Right ventricle myocardium inferior (tissue), 1 donor: ENCODE measurements at regions of chr10 and their contacts with region 1.

Region 1: DNA sequence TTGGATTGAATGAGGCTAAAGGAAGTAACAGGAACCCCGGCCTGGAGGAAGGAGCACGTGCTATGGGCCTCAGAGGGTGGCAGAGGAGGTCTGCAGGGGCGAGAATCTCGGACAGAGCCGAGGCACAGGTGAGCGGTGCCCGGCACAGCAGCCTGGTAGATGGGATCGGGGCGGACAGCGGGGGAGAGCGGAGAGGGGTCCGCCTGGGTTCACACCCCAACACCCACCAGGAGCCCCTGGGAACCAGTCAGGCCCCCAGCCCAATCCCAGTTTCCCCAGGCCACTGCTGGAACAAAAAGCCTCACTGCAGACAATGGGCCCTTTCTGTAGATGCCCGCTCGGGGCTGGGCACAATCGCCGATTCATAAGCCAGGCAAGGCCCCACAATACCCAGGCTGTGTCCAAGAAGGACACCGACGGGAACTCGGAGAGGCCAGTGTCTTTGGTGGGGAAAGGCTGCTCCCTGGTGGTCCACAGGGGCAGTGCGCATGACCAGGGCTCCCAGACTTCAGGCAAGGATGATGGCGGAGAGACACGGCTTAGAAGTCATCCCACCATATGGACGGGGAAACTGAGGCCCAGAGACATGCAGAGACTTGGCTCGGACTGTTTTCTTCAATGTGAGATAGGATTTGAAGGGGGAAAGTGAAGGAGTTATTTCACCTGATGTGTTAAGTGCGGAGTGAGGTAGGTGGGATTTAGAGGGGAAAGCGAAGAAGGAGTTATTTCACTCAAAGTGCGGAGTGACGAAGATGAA is 106.9 kb upstream of the GPR26 start:
- DNase-seq: peak; percentile 77
- ATAC-seq: peak; percentile 79

Region 2: GRCh38 chr10:123043409-123043925 is 515.8 kb before region 1 on chr10:
- intact Hi-C with region 1: loop called (anchors 1 kb)
- DNase-seq: no peak
- ATAC-seq: no peak

Region 3: GRCh38 chr10:123132576-123133477 is 426.4 kb before region 1 on chr10:
- intact Hi-C with region 1: loop called (anchors 2 kb)
- DNase-seq: peak; percentile 91
- ATAC-seq: peak; percentile 81

Region 4: DNA sequence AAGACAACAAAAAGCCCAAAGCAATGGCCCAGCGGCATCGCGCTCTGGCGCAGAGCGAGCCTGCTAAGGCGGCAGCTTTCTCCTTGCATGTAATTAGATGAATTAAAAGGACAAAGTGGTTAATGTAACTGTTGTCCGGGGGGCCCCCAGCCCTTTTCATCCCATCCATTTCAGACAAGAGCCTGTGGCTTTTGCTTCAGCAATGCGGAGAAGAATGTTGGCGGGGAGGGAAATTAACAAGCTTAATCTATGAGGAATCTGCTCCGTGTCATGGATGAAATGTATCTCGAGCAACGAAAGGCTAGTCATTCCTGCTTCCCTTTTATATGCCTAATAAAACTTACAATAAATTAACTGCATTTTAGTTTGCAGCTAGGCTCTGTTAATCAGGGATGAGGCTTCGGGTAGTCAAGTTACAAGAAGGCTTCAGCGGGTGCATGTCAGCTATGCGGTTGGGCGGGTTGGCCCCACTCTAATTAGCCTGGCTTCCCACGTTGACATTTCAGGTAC is 201.8 kb before region 1 on chr10:
- intact Hi-C with region 1: no loop called
- DNase-seq: no peak
- ATAC-seq: no peak